Naive thymus-derived CD8-positive, alpha-beta T cell (primary cell): ENCODE measurements at regions of chr14 and their contacts with region 1.

Region 1: GRCh38 chr14:58297762-58298476 is 436 bp upstream of the ARID4A start:
- DNase-seq: peak; percentile 96 to 100 (median 99)
- ATAC-seq: peak; percentile 83 to 86
- H3K4me3 Mint-ChIP-seq: no peak overlapping the region
- H3K27ac Mint-ChIP-seq: no peak overlapping the region
- H3K4me1 Mint-ChIP-seq: peaks cover 10 to 64% (median 45%) of the 10 kb centered on the region in 4 donors
- H3K27me3 Mint-ChIP-seq: no peaks in the 10 kb centered on the region

Region 2: DNA sequence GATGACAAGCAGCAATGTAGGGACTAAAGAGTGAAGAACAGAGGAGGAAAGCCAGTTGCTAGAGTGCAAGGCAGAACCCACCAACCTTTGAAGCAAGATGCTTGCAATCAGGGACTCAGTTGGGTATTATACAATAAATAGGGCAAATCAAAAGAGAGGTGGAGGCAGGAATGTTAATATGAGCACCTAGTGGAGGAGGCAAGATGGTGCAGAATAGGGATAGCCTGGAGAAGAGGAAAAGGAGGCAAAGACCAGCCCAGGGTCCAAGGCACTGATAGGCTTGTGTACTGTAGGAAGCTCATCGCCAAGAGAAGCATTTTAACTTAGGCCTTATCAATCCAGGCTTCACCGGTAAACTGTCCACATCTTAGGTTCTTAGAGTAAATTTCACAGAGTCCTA is 283.1 kb before region 1 on chr14:
- POLR2A ChIA-PET with region 1: no interaction called
- DNase-seq: no peak
- ATAC-seq: no peak
- H3K4me3 Mint-ChIP-seq: no peak overlapping the region
- H3K27ac Mint-ChIP-seq: no peak overlapping the region
- H3K4me1 Mint-ChIP-seq: no peaks in the 10 kb centered on the region
- H3K27me3 Mint-ChIP-seq: peaks cover 0 to 6% (median 2%) of the 10 kb centered on the region in 5 donors

Region 3: GRCh38 chr14:58239244-58240195 is 58.4 kb before region 1 on chr14:
- POLR2A ChIA-PET with region 1: interaction called, 51 read pairs
- DNase-seq: peak; percentile 68 to 94 (median 84)
- ATAC-seq: peak; percentile 35 to 37
- H3K4me3 Mint-ChIP-seq: no peak overlapping the region
- H3K27ac Mint-ChIP-seq: no peak overlapping the region
- H3K4me1 Mint-ChIP-seq: peaks cover 16 to 24% (median 21%) of the 10 kb centered on the region in 4 donors
- H3K27me3 Mint-ChIP-seq: peaks cover 0 to 2% (median 0%) of the 10 kb centered on the region in 5 donors

Region 4: DNA sequence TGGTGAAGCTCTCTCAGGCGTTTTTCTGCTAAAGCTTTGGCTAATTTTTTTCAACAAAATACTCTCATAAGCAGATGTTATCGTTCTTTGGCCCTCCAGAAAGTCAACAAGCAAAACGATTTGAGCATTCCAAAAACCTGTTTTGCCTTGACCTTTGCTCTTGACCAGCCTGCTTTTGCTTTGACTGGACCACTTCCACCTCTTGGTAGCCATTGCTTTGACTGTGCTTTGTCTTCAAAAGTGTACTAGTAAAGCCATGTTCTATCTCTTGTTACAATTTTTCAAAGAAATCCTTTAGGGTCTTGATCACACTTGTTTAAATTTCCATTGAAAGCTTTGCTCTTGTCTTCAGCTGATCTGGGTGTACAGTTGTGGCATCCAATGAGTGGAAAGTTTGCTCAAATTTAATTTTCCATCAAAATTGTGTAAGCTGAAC is 10.3 kb before region 1 on chr14:
- POLR2A ChIA-PET with region 1: interaction called, 12 read pairs
- DNase-seq: no peak
- ATAC-seq: no peak
- H3K4me3 Mint-ChIP-seq: no peak overlapping the region
- H3K27ac Mint-ChIP-seq: peak overlapping the region in 6 of 10 donors; percentile 2 to 67 (median 32)
- H3K4me1 Mint-ChIP-seq: peaks cover 35 to 77% (median 69%) of the 10 kb centered on the region in 4 donors
- H3K27me3 Mint-ChIP-seq: no peaks in the 10 kb centered on the region

Region 5: GRCh38 chr14:58327019-58327418 is 29.1 kb after region 1 on chr14:
- POLR2A ChIA-PET with region 1: interaction called, 15 read pairs
- DNase-seq: no peak
- ATAC-seq: no peak
- H3K4me3 Mint-ChIP-seq: no peak overlapping the region
- H3K27ac Mint-ChIP-seq: peak overlapping the region in 2 of 10 donors; percentile 25 to 69
- H3K4me1 Mint-ChIP-seq: peaks cover 6 to 17% (median 14%) of the 10 kb centered on the region in 4 donors
- H3K27me3 Mint-ChIP-seq: no peaks in the 10 kb centered on the region

Region 6: DNA sequence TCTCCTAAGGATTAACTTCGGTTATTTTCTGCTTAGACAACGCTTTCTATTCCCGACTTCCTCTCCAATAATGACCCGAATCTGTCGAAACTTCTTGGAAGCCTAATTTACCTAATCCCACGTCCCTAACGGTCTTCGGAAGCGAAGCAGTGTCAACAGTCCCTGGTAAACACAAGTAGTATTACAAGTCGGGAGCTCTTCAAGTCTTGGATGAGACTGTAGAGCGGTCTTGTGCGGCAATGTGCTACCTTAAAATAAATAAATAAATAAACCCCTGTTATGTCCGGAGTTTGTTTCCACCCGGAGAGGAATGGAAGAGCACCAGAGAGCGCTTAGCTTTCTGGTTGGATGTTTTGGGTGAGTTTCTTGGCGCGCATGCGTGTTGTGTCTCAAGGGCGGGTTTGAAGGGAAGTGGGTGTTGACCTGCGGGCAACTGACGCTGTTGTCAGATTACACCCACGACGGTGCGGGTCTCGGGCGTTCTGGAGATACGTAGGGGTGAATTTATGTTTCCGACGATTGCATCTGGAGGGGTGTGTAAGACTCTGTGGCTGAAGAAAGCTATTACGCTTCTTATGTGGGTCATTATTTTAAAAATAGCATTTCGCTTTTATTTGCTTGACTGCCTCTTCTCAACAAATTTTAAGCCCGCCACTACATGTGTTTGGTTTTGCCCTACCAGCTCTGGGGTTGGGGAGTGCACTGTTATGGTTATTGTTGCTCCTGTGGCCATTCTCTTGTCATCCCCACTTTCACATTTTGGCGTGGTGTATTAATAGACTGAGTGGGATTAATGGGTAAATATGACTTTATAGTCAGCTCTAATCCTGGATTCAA is 129.6 kb after region 1 on chr14 and contains the starts of genes KIAA0586 and TIMM9:
- POLR2A ChIA-PET with region 1: interaction called, 46 read pairs
- DNase-seq: peak; percentile 85 to 99 (median 95)
- ATAC-seq: peak; percentile 92 to 93
- H3K4me3 Mint-ChIP-seq: peak within 1 kb of the TSS; percentile 78 to 96 (median 90)
- H3K27ac Mint-ChIP-seq: peak within 1 kb of the TSS; percentile 90 to 99 (median 96)
- H3K4me1 Mint-ChIP-seq: peaks cover 10 to 53% (median 43%) of the 10 kb centered on the region in 4 donors
- H3K27me3 Mint-ChIP-seq: peaks cover 0 to 2% (median 0%) of the 10 kb centered on the region in 5 donors
- polyA plus RNA-seq, gene KIAA0586: 19.1 to 30.5 (median 29.6) TPM
- polyA plus RNA-seq, gene TIMM9: 59.6 to 72.2 (median 71.0) TPM